ENCODE measurements at regions of chr1 and their contacts with region 1.

Region 1: DNA sequence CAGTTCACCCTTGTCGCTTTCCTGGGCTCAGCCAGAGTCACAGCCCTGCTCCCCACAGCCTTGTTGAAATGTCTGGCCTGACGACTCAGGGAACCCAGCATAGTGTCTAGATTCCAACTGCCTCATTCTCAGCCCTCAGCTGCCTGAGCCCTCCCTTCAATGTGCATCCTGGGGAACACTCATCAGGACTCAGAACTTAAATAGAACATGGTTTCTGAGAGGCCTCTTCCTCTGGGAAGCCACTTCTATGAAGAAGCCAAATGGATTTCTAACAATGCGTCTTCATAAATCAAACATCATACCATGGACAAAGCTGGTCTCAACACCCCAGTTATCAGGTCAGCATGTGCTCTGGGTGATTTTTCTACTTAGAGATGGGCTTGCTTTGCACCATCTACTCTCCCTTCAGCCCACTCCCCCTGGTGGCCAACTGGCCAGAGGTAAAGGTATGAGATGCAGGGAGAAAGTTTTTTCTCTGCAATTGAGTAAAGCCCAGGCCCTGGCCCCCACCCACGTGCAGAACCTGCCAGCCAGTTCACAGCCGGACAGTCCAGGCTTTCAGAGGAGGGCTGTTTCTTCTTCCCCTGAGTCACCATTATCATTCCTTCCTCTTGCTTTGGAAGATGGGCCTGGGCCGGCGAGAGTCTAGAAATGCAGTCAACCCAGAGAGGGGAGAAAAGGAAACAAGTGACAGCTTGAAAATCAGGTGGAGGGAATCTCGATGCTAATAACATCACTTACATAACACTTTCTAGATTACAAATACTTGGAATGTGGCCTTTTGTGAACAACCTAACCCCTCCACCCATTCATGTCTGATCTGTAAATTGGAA is 32.1 kb downstream of the CD244 start:
- DNase-seq: peak; percentile 78
- H3K4me3 ChIP-seq: no peak overlapping the region
- H3K27ac ChIP-seq: no peak overlapping the region
- H3K4me1 ChIP-seq: no peaks in the 10 kb centered on the region
- H3K27me3 ChIP-seq: no peaks in the 10 kb centered on the region
- CTCF ChIP-seq: peak; percentile 61

Region 2: GRCh38 chr1:160675641-160676410 is 154.7 kb before region 1 on chr1:
- intact Hi-C with region 1: loop called (anchors 5 kb)
- DNase-seq: peak; percentile 70
- H3K4me3 ChIP-seq: no peak overlapping the region
- H3K27ac ChIP-seq: no peak overlapping the region
- H3K4me1 ChIP-seq: no peaks in the 10 kb centered on the region
- H3K27me3 ChIP-seq: no peaks in the 10 kb centered on the region
- CTCF ChIP-seq: peak; percentile 62

Region 3: GRCh38 chr1:160726498-160727315 is 103.8 kb before region 1 on chr1:
- intact Hi-C with region 1: loop called (anchors 2 kb)
- DNase-seq: peak; percentile 69
- H3K4me3 ChIP-seq: no peak overlapping the region
- H3K27ac ChIP-seq: peak overlapping the region; percentile 39
- H3K4me1 ChIP-seq: peaks cover 3% of the 10 kb centered on the region
- H3K27me3 ChIP-seq: no peaks in the 10 kb centered on the region
- CTCF ChIP-seq: peak; percentile 84

Region 4: DNA sequence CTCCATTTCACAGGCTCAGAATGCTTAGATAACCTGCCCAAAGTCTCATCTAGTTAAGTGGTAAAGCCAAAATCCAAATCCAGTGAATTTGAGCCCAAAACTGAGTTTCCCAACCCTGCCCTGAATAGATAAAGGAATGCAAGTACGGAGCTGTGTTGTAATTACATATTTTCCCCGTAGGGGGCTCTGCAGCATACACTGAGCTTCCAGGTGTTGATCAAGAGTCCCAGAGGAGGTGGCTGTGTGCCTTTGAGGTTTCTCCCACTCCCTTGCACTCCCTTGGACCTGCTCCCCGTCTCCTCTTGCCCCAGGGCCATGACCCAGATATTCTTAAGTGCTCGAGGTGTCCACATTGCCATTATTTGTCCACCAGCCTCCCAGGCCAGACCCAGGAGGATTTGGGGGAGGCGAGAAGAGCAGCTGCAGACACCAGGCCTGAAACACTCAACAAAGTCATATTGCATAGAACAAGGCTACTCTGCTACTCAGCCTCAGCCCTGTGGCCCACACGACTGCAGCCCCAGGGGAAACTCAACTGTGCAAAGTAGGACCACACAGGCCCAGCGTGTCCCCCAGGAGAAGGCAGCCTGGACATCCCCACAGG is 52.9 kb before region 1 on chr1:
- intact Hi-C with region 1: loop called (anchors 2 kb)
- DNase-seq: peak; percentile 66
- H3K4me3 ChIP-seq: no peak overlapping the region
- H3K27ac ChIP-seq: no peak overlapping the region
- H3K4me1 ChIP-seq: peaks cover 12% of the 10 kb centered on the region
- H3K27me3 ChIP-seq: no peaks in the 10 kb centered on the region
- CTCF ChIP-seq: peak; percentile 65